Heart left ventricle (tissue), 16 donors: ENCODE measurements at regions of chr3 and their contacts with region 1.

Region 1: GRCh38 chr3:129439817-129440617 is at the starts of genes IFT122 and MBD4:
- DNase-seq: peak; percentile 96 to 98 (median 97)
- ATAC-seq: peak; percentile 94 to 97 (median 96)
- H3K4me3 ChIP-seq: peak within 1 kb of the TSS; percentile 52 to 89 (median 81)
- H3K27ac ChIP-seq: peak within 1 kb of the TSS; percentile 86 to 98 (median 90)
- H3K4me1 ChIP-seq: peaks cover 5 to 85% (median 46%) of the 10 kb centered on the region in 12 donors
- H3K27me3 ChIP-seq: no peaks in the 10 kb centered on the region
- CTCF ChIP-seq: peak in 1 of 12 donors; percentile 2
- POLR2A ChIP-seq: peak in 1 of 2 donors; percentile 86
- total RNA-seq, gene IFT122: 13.1 to 34.2 (median 16.6) TPM
- total RNA-seq, gene MBD4: 13.0 to 26.7 (median 20.6) TPM

Region 2: DNA sequence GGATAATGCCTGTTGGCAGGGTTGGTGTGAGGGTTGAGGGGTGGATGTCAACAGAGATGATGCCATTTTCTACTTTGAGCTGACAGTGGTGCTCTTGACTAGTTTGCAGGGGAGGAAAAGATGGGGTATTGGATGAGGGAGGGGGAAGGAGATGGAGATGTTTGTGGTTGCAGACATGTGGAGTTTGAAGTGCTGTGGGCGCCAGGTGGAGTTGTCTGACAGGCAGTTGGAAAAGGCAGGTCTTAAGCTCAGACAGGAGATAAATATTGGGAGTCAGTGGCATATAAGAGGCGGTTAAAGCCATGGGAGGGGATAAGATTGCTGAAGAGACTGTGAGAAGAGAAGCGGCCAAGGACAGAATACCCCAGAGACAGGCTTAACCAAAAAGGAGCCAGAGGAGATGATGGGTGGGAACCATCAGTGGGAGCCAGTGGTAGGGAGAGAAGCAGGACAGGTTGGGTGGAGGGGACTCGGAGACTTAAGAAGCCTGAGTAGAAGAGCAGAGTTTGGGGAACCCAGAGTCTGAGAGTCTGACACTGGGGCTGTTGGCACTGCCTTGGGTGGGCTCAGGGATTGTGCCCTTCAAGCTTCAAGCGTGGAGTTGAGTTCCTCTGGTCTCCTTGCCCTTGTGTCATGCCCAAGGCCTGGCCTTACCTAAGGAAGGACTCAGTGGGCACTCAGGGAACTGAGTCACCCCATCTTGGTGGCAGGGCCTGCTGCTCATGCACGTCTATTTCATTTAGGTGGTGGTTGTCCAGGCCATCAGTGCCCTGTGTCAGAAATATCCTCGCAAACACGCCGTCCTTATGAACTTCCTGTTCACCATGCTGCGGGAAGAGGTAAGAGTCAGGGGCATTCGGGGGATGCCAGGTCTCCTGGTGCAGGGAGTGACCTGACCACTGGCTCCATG is 176.6 kb before region 1 on chr3:
- intact Hi-C with region 1: no loop called
- DNase-seq: no peak
- ATAC-seq: no peak
- H3K4me3 ChIP-seq: no peak overlapping the region
- H3K27ac ChIP-seq: no peak overlapping the region
- H3K4me1 ChIP-seq: no peaks in the 10 kb centered on the region
- H3K27me3 ChIP-seq: no peaks in the 10 kb centered on the region
- CTCF ChIP-seq: no peak
- POLR2A ChIP-seq: no peak

Region 3: DNA sequence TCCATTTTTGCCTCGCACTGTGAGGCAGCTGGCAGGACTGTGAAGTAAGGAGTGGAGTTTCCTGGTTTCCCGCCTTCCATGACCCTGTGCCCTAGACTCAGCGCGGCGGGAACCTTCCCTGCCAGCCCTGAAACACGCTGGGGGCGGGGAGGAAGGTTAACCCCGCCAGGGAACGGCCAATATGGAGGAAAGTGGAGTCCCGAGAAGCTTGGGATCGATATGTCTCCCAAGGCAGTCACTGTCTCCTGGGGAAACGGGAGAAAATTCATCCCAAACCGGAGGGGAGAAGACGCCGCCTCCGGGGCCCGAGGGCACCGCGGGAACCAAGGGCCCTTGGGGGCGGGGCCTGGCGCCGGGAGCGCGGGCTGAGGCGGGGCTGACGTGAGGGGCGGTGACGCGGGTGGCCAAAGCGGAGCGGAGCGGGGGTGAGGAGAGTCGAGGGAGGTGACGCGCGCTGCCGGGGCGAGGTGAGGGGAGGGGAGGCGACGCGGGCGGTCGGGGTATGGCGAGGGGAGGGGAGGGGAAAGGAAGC is 161.5 kb before region 1 on chr3 and contains the start of gene HMCES:
- intact Hi-C with region 1: no loop called
- DNase-seq: peak; percentile 95 to 98 (median 97)
- ATAC-seq: peak; percentile 94 to 98 (median 96)
- H3K4me3 ChIP-seq: peak within 1 kb of the TSS; percentile 77 to 98 (median 91)
- H3K27ac ChIP-seq: peak within 1 kb of the TSS; percentile 93 to 98 (median 96)
- H3K4me1 ChIP-seq: peaks cover 0 to 40% (median 17%) of the 10 kb centered on the region in 12 donors
- H3K27me3 ChIP-seq: no peaks in the 10 kb centered on the region
- CTCF ChIP-seq: no peak
- POLR2A ChIP-seq: no peak
- total RNA-seq, gene HMCES: 30.0 to 46.3 (median 37.7) TPM

Region 4: DNA sequence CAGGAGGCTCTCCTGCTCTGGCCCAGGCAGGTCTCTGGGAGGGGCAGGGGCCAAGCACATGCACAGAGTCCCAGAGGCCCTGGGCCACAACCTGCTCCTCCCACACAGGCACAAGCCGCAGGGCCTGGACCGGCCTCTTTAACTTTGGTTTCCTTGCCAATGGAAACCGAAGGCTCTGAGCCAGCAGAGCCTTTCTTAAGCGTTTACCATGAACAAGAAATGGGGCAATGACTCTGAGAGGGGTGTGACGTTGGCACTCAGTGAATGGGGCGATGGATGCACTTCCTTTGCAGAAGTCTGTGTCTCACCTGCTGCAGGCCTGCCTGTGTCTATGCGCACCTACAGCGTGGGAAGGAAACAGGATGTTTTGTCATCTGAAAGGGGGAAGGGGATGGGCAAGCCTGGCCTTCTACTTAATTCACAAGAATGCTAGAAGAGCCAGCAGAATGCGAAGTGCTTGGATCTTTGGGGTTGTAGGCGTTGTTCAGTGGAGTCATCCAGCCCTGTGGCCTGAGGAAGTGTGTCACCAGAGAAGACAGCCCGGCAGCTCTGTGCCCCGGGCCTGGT is 41.8 kb after region 1 on chr3:
- intact Hi-C with region 1: loop called in 1 of 10 experiments (anchors 5 kb)
- DNase-seq: peak in 4 of 5 donors; percentile 46 to 72 (median 56)
- ATAC-seq: peak; percentile 52 to 82 (median 62)
- H3K4me3 ChIP-seq: no peak overlapping the region
- H3K27ac ChIP-seq: peak overlapping the region in 11 of 12 donors; percentile 40 to 72 (median 63)
- H3K4me1 ChIP-seq: peaks cover 0 to 44% (median 30%) of the 10 kb centered on the region in 12 donors
- H3K27me3 ChIP-seq: no peaks in the 10 kb centered on the region
- CTCF ChIP-seq: no peak
- POLR2A ChIP-seq: no peak